ENCODE measurements at regions of chr6 and their contacts with region 1.

Region 1: DNA sequence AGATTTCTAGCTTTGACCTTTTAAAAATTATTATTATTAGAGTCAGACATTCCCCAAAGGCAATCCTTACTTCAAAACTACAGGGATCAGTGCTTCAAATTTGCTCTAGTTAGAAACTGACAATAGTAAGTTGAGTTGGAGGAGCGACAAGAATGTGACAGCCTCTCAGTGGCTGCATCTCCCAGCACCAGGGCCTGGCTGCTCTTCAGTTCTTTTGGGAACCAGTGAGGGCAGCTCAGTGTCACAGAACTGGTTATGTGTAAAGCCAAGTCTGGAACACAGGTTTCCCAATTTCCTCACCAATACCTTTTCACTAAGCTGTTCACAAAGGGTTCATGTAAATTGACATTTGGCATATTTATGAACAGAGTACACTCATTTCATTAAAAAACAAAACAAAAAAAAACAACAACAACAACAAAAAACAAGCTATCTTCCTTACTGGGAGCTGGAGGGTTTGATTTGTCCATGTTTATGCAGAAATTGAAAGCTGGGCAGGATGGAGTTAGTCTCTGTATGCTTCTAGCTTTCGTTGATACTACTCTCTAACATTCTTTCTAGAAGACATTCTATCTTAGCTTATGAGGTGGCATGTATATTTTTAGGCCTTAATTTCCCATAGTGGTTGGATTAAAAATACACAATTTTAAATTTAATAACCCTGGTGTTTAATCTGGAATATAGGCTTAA is 95.0 kb downstream of the SAMD5 start:
- DNase-seq: peak in 1 of 2 donors; percentile 7
- ATAC-seq: peak; percentile 56 to 69
- H3K4me3 ChIP-seq: no peak overlapping the region
- H3K27ac ChIP-seq: peak overlapping the region in 2 of 4 donors; percentile 22 to 40
- H3K4me1 ChIP-seq: peaks cover 17% of the 10 kb centered on the region in 2 donors
- H3K27me3 ChIP-seq: no peaks in the 10 kb centered on the region
- CTCF ChIP-seq: no peak
- POLR2A ChIP-seq: no peak

Region 2: GRCh38 chr6:147567141-147567805 is 36.3 kb before region 1 on chr6:
- in situ Hi-C with region 1: no loop called
- intact Hi-C with region 1: loop called (anchors 2 kb)
- DNase-seq: peak in 1 of 2 donors; percentile 12
- ATAC-seq: peak; percentile 92 to 97
- H3K4me3 ChIP-seq: peak overlapping the region in 2 of 4 donors; percentile 14 to 40
- H3K27ac ChIP-seq: peak overlapping the region; percentile 47 to 62 (median 57)
- H3K4me1 ChIP-seq: peaks cover 5 to 20% of the 10 kb centered on the region in 2 donors
- H3K27me3 ChIP-seq: no peaks in the 10 kb centered on the region
- CTCF ChIP-seq: no peak
- POLR2A ChIP-seq: no peak